ENCODE measurements at regions of chr19 and their contacts with region 1.

Region 1: DNA sequence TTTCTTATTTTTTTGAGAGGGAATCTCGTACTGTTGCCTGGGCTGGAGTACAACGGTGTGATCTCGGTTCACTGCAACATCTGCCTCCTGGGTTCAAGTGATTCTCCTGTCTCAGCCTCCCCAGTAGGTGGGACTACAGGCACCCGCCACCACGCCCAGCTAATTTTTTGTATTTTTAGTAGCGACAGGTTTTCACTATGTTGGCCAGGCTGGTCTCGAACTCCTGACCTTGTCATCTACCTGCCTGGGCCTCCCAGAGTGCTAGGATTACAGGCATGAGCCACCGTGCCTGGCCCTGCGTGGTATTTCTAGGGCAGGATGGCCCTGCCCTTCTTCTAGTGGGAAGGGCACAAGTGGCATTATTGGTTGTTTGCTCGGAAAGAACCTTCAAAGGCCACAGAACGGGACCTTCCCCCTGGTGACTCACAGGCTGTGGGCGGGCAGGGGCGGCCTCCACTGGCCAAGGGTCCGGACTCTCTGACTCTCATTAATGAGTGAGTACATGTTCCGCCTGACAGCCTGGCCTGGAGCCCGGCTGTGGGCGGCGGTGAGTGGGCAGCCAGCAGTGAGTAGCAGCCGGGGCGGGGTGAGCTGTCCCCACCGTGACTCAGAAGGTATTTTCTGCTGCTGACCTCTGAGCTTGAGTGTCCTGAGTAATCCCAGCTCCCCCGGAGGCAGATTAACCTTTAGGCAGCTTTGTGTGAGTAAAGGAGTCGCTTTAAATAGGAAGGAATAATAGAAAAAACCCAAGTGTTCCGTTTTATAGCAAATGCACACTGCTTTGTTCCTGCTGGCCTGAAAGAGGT is 5.1 kb downstream of the DOT1L start:
- DNase-seq: peak; percentile 93
- ATAC-seq: peak; percentile 92

Region 2: GRCh38 chr19:2236314-2237050 is 67.7 kb after region 1 on chr19 and contains the starts of genes PLEKHJ1 and SF3A2:
- intact Hi-C with region 1: loop called (anchors 5 kb)
- DNase-seq: peak; percentile 98
- ATAC-seq: peak; percentile 97
- total RNA-seq, gene PLEKHJ1: 34.2 TPM
- total RNA-seq, gene SF3A2: 65.0 TPM

Region 3: DNA sequence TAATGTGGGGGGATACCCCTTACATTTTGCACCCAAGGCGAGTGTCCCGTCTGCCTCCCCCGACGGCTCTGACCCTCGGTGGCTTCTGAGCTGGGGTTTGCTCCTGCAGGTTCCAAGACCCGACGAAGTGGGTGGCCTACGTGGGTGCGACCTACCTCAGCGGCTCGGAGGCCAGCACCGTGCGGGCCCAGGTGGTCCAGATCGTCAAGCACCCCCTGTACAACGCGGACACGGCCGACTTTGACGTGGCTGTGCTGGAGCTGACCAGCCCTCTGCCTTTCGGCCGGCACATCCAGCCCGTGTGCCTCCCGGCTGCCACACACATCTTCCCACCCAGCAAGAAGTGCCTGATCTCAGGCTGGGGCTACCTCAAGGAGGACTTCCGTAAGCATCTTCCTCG is 239.4 kb after region 1 on chr19:
- intact Hi-C with region 1: no loop called
- DNase-seq: no peak
- ATAC-seq: no peak

Measured in sciatic nerve (tissue), 2 donors.